Naive thymus-derived CD4-positive, alpha-beta T cell (primary cell): ENCODE measurements at regions of chr9 and their contacts with region 1.

Region 1: DNA sequence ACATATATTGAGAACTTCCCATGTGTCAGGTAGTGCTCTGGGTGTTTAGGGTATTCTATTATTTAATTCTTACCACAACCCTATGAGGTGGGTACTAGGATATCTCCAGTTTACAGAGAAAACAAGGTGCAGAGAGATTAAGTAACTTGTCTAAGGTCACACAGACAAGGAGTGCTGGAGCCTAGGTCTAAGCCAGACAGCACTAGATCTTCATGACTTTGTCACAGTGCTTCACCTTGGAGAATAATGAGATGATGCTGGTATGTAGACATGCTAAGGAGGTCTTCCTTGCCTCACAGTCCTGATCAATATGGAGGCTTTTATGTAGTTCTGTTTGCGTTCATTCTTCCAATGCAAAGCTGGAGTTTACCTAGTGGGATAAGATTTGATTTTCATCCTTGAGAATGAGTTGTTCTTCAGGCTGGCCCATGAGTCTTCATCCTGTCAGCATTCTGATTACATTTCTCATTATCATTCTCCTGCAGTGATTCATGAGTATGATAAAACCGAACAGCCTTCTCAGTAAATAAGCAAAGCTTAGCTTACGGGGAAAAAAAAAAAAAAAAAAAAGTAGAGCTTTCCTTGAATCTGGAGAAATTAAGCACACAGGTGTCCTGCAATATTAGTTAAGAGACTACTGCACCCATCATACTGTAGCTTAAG is 176.3 kb downstream of the C9orf152 start:
- DNase-seq: no peak
- ATAC-seq: no peak
- H3K4me3 ChIP-seq: no peak overlapping the region
- H3K4me3 Mint-ChIP-seq: no peak overlapping the region
- H3K27ac ChIP-seq: no peak overlapping the region
- H3K27ac Mint-ChIP-seq: peak overlapping the region in 2 of 9 donors; percentile 31 to 66
- H3K4me1 ChIP-seq: peaks cover 0 to 19% of the 10 kb centered on the region in 2 donors
- H3K4me1 Mint-ChIP-seq: peaks cover 15 to 31% (median 27%) of the 10 kb centered on the region in 7 donors
- H3K27me3 ChIP-seq: no peaks in the 10 kb centered on the region
- H3K27me3 Mint-ChIP-seq: peaks cover 0 to 4% (median 0%) of the 10 kb centered on the region in 5 donors

Region 2: GRCh38 chr9:109953813-109954497 is 77.7 kb before region 1 on chr9:
- CTCF ChIA-PET with region 1: no interaction called
- POLR2A ChIA-PET with region 1: interaction called, 10 read pairs
- intact Hi-C with region 1: no loop called
- DNase-seq: no peak
- ATAC-seq: no peak
- H3K4me3 ChIP-seq: no peak overlapping the region
- H3K4me3 Mint-ChIP-seq: no peak overlapping the region
- H3K27ac ChIP-seq: no peak overlapping the region
- H3K27ac Mint-ChIP-seq: no peak overlapping the region
- H3K4me1 ChIP-seq: no peaks in the 10 kb centered on the region
- H3K4me1 Mint-ChIP-seq: peaks cover 14 to 46% (median 28%) of the 10 kb centered on the region in 7 donors
- H3K27me3 ChIP-seq: no peaks in the 10 kb centered on the region
- H3K27me3 Mint-ChIP-seq: peaks cover 0 to 9% (median 5%) of the 10 kb centered on the region in 5 donors

Region 3: GRCh38 chr9:110015759-110016158 is 15.9 kb before region 1 on chr9:
- CTCF ChIA-PET with region 1: no interaction called
- POLR2A ChIA-PET with region 1: no interaction called
- intact Hi-C with region 1: no loop called
- DNase-seq: peak in 1 of 9 donors; percentile 25
- ATAC-seq: no peak
- H3K4me3 ChIP-seq: no peak overlapping the region
- H3K4me3 Mint-ChIP-seq: no peak overlapping the region
- H3K27ac ChIP-seq: no peak overlapping the region
- H3K27ac Mint-ChIP-seq: no peak overlapping the region
- H3K4me1 ChIP-seq: no peaks in the 10 kb centered on the region
- H3K4me1 Mint-ChIP-seq: peaks cover 0 to 10% (median 0%) of the 10 kb centered on the region in 7 donors
- H3K27me3 ChIP-seq: no peaks in the 10 kb centered on the region
- H3K27me3 Mint-ChIP-seq: peaks cover 0 to 9% (median 4%) of the 10 kb centered on the region in 5 donors

Region 4: GRCh38 chr9:110125207-110125751 is 93.6 kb after region 1 on chr9:
- CTCF ChIA-PET with region 1: no interaction called
- POLR2A ChIA-PET with region 1: no interaction called
- intact Hi-C with region 1: no loop called
- DNase-seq: no peak
- ATAC-seq: no peak
- H3K4me3 ChIP-seq: no peak overlapping the region
- H3K4me3 Mint-ChIP-seq: peak overlapping the region in 7 of 10 donors; percentile 71 to 83 (median 74)
- H3K27ac ChIP-seq: no peak overlapping the region
- H3K27ac Mint-ChIP-seq: peak overlapping the region in 8 of 9 donors; percentile 56 to 91 (median 78)
- H3K4me1 ChIP-seq: peaks cover 0 to 16% of the 10 kb centered on the region in 2 donors
- H3K4me1 Mint-ChIP-seq: peaks cover 20 to 66% (median 23%) of the 10 kb centered on the region in 7 donors
- H3K27me3 ChIP-seq: no peaks in the 10 kb centered on the region
- H3K27me3 Mint-ChIP-seq: no peaks in the 10 kb centered on the region